ENCODE measurements at regions of chr19 and their contacts with region 1.

Region 1: GRCh38 chr19:31962561-31962996 is 382.8 kb upstream of the ZNF507 start:
- DNase-seq: peak in 3 of 5 donors; percentile 43 to 56 (median 47)
- H3K4me3 ChIP-seq: no peak overlapping the region
- H3K27ac ChIP-seq: peak overlapping the region in 1 of 2 donors; percentile 45
- H3K4me1 ChIP-seq: peaks cover 17% of the 10 kb centered on the region
- H3K27me3 ChIP-seq: no peaks in the 10 kb centered on the region
- CTCF ChIP-seq: no peak
- EP300 ChIP-seq: no peak
- POLR2A ChIP-seq: no peak

Region 2: GRCh38 chr19:31906111-31906871 is 56.3 kb before region 1 on chr19:
- intact Hi-C with region 1: loop called in 1 of 4 experiments (anchors 5 kb)
- DNase-seq: peak in 4 of 5 donors; percentile 46 to 69 (median 52)
- H3K4me3 ChIP-seq: no peak overlapping the region
- H3K27ac ChIP-seq: peak overlapping the region; percentile 40 to 85
- H3K4me1 ChIP-seq: peaks cover 18% of the 10 kb centered on the region
- H3K27me3 ChIP-seq: no peaks in the 10 kb centered on the region
- CTCF ChIP-seq: no peak
- EP300 ChIP-seq: no peak
- POLR2A ChIP-seq: no peak

Measured in ovary (tissue), 10 donors.